ENCODE measurements at regions of chr15 and their contacts with region 1.

Region 1: GRCh38 chr15:74251131-74251811 is 15.1 kb downstream of the CCDC33 start:
- DNase-seq: peak; percentile 84 to 85
- ATAC-seq: peak; percentile 89 to 99 (median 95)
- H3K4me3 ChIP-seq: no peak overlapping the region
- H3K27ac ChIP-seq: peak overlapping the region in 7 of 10 donors; percentile 20 to 62 (median 49)
- H3K4me1 ChIP-seq: peaks cover 0 to 34% (median 22%) of the 10 kb centered on the region in 9 donors
- H3K27me3 ChIP-seq: peaks cover 0 to 6% (median 4%) of the 10 kb centered on the region in 7 donors
- CTCF ChIP-seq: no peak

Region 2: GRCh38 chr15:73756947-73757513 is 494.2 kb before region 1 on chr15:
- intact Hi-C with region 1: loop called in 1 of 10 experiments (anchors 2 kb)
- DNase-seq: no peak
- ATAC-seq: no peak
- H3K4me3 ChIP-seq: no peak overlapping the region
- H3K27ac ChIP-seq: no peak overlapping the region
- H3K4me1 ChIP-seq: peaks cover 2 to 23% (median 5%) of the 10 kb centered on the region in 9 donors
- H3K27me3 ChIP-seq: peaks cover 0 to 45% (median 11%) of the 10 kb centered on the region in 7 donors
- CTCF ChIP-seq: no peak

Region 3: DNA sequence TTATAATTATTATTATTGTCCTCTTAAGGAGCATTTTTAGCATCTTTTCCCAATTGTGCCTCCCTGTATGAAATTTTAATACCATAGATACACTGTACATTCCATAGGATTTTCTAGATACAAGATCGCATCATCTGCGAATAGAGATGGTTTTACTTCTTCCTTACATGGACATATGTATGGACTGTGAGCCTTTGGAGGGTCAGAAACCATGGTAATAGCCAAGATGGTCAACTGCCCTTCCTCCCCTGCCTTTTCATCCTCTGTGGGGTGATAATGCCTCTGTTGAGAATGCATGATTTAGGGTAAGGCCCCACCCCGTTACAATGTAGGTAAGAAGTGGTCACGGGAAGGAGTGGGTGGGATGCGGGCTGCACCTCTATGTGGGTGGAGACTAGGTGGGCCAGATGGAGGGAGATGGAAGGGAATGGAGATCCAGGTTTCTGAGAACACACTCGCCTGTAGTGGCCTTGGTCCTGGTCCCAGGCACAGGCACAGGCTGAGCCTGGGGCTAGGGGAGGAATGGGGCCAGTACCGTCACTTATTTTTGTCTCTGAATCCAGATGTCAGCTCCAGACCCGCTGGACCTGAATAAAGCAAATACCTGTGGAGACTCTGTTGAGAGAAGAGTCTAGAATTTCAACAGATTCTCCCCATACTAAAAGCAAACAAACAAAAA is 200.6 kb before region 1 on chr15:
- intact Hi-C with region 1: no loop called
- DNase-seq: no peak
- ATAC-seq: peak in 6 of 8 donors; percentile 4 to 59 (median 42)
- H3K4me3 ChIP-seq: no peak overlapping the region
- H3K27ac ChIP-seq: peak overlapping the region; percentile 40 to 87 (median 80)
- H3K4me1 ChIP-seq: peaks cover 5 to 67% (median 38%) of the 10 kb centered on the region in 9 donors
- H3K27me3 ChIP-seq: no peaks in the 10 kb centered on the region
- CTCF ChIP-seq: no peak

Region 4: DNA sequence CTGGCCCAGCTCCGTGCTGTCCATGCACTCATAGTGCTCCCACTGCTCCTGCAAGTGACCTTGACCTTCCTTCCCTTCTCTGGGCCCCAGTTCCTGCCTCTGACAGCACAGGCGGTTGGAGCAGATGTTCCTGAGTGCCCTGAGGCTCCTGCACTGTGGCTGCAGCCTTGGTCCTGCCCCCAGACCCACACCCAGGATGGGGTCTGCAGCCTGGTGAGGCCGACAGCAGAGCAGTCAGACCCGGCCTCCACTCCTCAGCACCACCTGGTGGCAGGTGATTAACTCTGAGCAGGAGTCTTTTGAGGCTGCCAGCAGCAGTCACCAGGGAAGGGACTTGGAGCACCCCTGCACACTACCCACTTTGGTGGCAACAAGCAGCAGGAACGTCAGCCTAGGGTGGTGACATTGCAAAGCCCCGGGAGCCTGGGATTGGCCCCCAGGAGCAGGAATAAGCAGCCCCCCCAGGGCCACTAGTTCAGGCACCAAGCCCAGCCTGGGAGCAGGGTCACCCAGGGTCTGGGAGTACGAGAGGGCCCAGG is 51.6 kb after region 1 on chr15:
- intact Hi-C with region 1: loop called in 1 of 10 experiments (anchors 5 kb)
- DNase-seq: peak; percentile 38 to 47
- ATAC-seq: peak; percentile 23 to 74 (median 56)
- H3K4me3 ChIP-seq: no peak overlapping the region
- H3K27ac ChIP-seq: no peak overlapping the region
- H3K4me1 ChIP-seq: peaks cover 0 to 11% (median 0%) of the 10 kb centered on the region in 9 donors
- H3K27me3 ChIP-seq: peaks cover 0 to 71% (median 34%) of the 10 kb centered on the region in 7 donors
- CTCF ChIP-seq: peak; percentile 53 to 76 (median 67)

Region 5: GRCh38 chr15:74350295-74351290 is 99.3 kb after region 1 on chr15:
- intact Hi-C with region 1: no loop called
- DNase-seq: no peak
- ATAC-seq: no peak
- H3K4me3 ChIP-seq: no peak overlapping the region
- H3K27ac ChIP-seq: no peak overlapping the region
- H3K4me1 ChIP-seq: no peaks in the 10 kb centered on the region
- H3K27me3 ChIP-seq: peaks cover 0 to 9% (median 5%) of the 10 kb centered on the region in 7 donors
- CTCF ChIP-seq: no peak